Heart left ventricle (tissue), 16 donors: ENCODE measurements at regions of chr5 and their contacts with region 1.

Region 1: GRCh38 chr5:90598293-90598692 is 39.7 kb downstream of the ADGRV1 start:
- DNase-seq: no peak
- ATAC-seq: no peak
- H3K4me3 ChIP-seq: no peak overlapping the region
- H3K27ac ChIP-seq: no peak overlapping the region
- H3K4me1 ChIP-seq: no peaks in the 10 kb centered on the region
- H3K27me3 ChIP-seq: peaks cover 0 to 9% (median 0%) of the 10 kb centered on the region in 9 donors
- CTCF ChIP-seq: no peak
- POLR2A ChIP-seq: no peak

Region 2: DNA sequence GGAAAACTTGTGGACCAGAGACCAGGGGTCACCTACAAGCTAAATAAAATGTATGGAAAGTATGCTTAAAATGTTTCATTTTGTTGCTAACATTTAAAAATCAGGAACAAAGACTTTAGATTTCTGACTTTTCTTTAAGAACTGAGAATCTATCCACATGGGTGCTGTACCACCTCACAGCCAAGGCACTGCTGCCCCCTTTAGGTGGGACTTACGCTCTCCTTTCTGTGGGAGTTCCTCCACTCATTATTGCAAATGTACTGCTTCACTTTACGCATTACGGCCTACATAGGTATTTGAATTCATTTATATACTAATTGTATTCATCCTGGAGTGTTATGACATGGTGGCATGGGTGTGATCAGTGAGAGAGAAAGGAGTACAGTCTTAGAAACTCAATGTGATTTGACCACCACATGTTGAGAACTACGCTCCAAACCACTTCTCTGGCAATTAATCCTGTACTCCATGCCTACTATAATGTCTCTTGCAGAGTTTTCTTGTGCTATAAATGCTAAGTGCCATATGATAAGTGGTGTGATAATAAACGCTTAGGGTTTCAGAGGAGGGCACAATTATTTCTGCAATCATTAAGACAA is 164.1 kb before region 1 on chr5:
- intact Hi-C with region 1: loop called in 5 of 10 experiments (anchors 5 to 10 kb)
- DNase-seq: peak in 2 of 5 donors; percentile 22 to 31
- ATAC-seq: peak in 1 of 4 donors; percentile 59
- H3K4me3 ChIP-seq: no peak overlapping the region
- H3K27ac ChIP-seq: no peak overlapping the region
- H3K4me1 ChIP-seq: peaks cover 0 to 4% (median 0%) of the 10 kb centered on the region in 12 donors
- H3K27me3 ChIP-seq: no peaks in the 10 kb centered on the region
- CTCF ChIP-seq: peak; percentile 34 to 65 (median 52)
- POLR2A ChIP-seq: no peak

Region 3: DNA sequence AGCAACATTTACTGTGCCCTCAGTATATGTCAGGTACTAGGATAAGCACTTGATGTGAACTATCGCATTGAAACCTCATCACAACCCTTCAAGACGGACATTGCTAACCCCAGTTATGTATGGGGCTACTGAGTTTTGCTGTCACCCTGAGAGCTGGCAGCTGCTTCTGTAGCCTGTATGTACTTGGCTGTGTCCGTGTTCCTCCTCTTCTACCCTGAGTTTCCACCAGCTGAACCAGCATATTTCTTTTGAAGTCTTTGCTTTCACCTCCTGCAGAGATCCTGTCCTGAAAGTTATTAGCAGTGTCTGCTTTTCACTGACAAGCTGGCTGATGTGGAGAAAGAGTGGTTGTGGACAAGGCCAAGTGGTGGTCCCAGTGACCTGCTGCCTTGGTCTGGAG is 23.6 kb after region 1 on chr5:
- intact Hi-C with region 1: no loop called
- DNase-seq: no peak
- ATAC-seq: no peak
- H3K4me3 ChIP-seq: no peak overlapping the region
- H3K27ac ChIP-seq: no peak overlapping the region
- H3K4me1 ChIP-seq: no peaks in the 10 kb centered on the region
- H3K27me3 ChIP-seq: no peaks in the 10 kb centered on the region
- CTCF ChIP-seq: no peak
- POLR2A ChIP-seq: no peak

Region 4: DNA sequence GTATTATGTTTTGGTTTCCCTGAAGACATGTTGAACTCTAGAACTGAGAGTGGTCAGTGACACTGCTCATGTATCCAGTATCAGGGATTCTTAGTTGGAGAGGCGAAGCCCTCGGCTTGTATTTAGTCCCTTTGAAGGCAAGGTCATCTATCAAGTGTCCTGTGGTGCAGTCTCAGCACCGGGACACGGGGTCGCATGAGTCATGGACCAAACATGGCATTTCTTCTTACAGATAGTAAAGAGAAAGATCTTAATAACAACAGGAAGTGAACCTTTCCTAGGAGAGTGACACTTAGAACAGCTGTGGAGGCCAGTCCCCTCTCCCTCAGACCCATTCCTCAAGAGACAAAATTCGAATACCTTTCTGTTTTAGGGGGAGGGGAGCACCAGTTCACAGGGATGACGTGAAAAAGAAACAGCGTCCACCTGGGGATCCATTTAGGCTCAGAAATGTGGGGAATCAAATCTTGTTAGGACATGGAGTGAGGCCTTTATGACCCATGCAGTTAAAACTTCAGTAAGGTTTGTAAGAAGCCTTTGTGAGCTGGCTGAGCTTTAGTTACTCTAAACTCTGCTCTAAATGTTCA is 46.8 kb after region 1 on chr5:
- intact Hi-C with region 1: no loop called
- DNase-seq: no peak
- ATAC-seq: no peak
- H3K4me3 ChIP-seq: no peak overlapping the region
- H3K27ac ChIP-seq: no peak overlapping the region
- H3K4me1 ChIP-seq: peaks cover 0 to 4% (median 0%) of the 10 kb centered on the region in 12 donors
- H3K27me3 ChIP-seq: no peaks in the 10 kb centered on the region
- CTCF ChIP-seq: no peak
- POLR2A ChIP-seq: no peak